ENCODE measurements at regions of chr14 and their contacts with region 1.

Region 1: GRCh38 chr14:99199846-99200653 is 71.9 kb downstream of the BCL11B start:
- DNase-seq: no peak
- ATAC-seq: no peak
- H3K4me3 Mint-ChIP-seq: peak overlapping the region; percentile 44
- H3K27ac Mint-ChIP-seq: peak overlapping the region; percentile 99
- H3K4me1 Mint-ChIP-seq: peaks cover 100% of the 10 kb centered on the region
- H3K27me3 Mint-ChIP-seq: no peaks in the 10 kb centered on the region

Region 2: GRCh38 chr14:98893675-98894074 is 306.4 kb before region 1 on chr14:
- CTCF ChIA-PET with region 1: no interaction called
- POLR2A ChIA-PET with region 1: no interaction called
- intact Hi-C with region 1: no loop called
- DNase-seq: no peak
- ATAC-seq: peak; percentile 36
- H3K4me3 Mint-ChIP-seq: no peak overlapping the region
- H3K27ac Mint-ChIP-seq: no peak overlapping the region
- H3K4me1 Mint-ChIP-seq: peaks cover 5% of the 10 kb centered on the region
- H3K27me3 Mint-ChIP-seq: no peaks in the 10 kb centered on the region

Region 3: GRCh38 chr14:99215277-99215676 is 15.2 kb after region 1 on chr14:
- CTCF ChIA-PET with region 1: interaction called, 7 read pairs
- POLR2A ChIA-PET with region 1: interaction called, 5 read pairs
- intact Hi-C with region 1: loop called in 1 of 2 experiments (anchors 2 kb)
- DNase-seq: no peak
- ATAC-seq: no peak
- H3K4me3 Mint-ChIP-seq: peak overlapping the region; percentile 57
- H3K27ac Mint-ChIP-seq: peak overlapping the region; percentile 79
- H3K4me1 Mint-ChIP-seq: peaks cover 95% of the 10 kb centered on the region
- H3K27me3 Mint-ChIP-seq: no peaks in the 10 kb centered on the region

Region 4: GRCh38 chr14:99480917-99481744 is 281.1 kb after region 1 on chr14 and contains the start of gene CCNK:
- CTCF ChIA-PET with region 1: no interaction called
- POLR2A ChIA-PET with region 1: interaction called, 3 read pairs
- intact Hi-C with region 1: loop called in 1 of 2 experiments (anchors 5 kb)
- DNase-seq: peak; percentile 100
- ATAC-seq: peak; percentile 95
- H3K4me3 Mint-ChIP-seq: peak within 1 kb of the TSS; percentile 97
- H3K27ac Mint-ChIP-seq: peak within 1 kb of the TSS; percentile 96
- H3K4me1 Mint-ChIP-seq: peaks cover 58% of the 10 kb centered on the region
- H3K27me3 Mint-ChIP-seq: no peaks in the 10 kb centered on the region
- total RNA-seq, gene CCNK: 93.7 to 96.2 TPM

Measured in activated CD4-positive, alpha-beta T cell treated with anti-CD3 and anti-CD28 coated beads for 36 hours (primary cell).